ENCODE measurements at regions of chr1 and their contacts with region 1.

Region 1: DNA sequence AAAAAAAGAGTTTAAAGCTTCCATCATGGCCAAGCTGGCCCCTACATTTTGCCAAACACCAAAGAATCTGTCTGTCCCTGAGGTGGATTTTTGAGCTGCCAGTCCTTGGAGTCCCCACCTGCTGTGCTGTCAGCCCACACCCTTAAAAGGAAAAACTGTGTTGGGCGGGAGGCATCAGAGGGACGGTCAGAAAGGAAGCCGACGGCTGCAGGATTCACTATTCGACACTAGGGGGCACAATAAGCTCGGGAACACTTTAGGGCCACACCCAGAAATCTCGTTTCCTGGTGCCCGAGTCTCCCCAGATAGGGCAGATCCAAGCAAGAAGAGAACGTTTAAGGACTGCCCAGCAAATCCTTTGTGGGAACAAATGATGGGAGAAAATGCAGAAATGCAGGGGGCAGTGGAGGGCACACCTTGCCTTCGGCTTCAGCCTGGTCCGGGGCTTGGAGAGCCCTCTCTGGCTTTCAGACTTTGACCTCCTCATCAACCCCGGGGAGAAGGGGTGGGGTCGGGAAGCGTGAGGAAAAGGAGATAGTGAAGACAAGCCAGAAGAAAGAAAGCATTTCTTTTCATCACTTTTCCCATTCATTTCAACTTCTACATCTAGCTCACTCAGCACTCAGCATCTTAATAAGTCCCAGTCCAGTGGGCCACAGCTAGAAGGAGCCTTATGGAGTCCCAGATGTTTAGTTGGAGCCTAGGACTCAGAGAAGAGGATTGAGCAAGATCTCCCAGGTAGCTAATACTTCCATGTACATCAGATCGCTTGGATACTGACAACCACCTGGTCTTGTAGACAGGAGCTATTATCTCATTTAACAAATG is 5.0 kb upstream of the CTTNBP2NL start:
- DNase-seq: peak; percentile 86
- CTCF ChIP-seq: peak; percentile 87

Region 2: GRCh38 chr1:112466078-112466660 is 75.2 kb after region 1 on chr1:
- in situ Hi-C with region 1: loop called (anchors 10 kb)
- DNase-seq: peak; percentile 81
- CTCF ChIP-seq: peak; percentile 78

Region 3: GRCh38 chr1:112557385-112557784 is 166.4 kb after region 1 on chr1:
- in situ Hi-C with region 1: no loop called
- DNase-seq: no peak
- CTCF ChIP-seq: no peak

Region 4: DNA sequence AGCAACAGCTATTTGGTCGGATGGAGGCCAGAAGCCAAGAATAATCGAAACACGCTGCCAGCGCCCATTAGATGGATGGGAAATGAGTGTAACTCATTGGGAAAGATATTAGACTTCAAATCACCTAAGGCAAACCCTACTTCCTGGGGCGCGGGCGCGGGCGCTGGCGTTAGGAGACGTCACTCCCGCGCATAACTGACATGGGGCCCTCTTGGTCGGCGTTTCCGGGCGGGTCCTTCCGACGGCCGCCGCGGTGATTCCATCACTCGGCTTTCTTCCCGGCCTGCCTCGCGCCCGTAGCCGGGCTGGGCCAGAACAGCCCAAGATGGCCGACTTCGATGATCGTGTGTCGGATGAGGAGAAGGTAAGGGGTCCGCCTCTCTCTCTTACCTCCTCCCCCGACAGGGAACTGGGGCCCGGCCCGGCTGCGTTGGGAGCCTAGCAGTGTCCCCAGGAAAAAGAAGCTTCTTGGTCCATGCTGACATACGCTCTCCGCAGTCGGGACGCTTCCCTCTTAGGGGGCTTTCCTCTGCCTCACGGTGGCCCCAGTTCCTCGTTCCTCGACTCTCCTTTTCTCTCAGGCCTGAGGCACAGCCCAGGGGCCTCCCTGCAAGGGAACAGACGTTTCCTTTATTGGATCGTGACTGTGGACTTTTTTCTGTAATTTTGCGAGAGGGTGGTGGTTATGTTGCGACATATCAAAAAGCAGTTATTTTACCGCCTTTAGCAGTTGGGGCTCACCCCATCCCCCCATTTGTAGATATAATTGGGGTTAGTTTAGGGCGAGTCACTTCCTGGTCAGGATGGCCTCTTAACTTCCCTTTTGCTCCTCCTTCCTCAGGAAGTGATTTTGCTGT is 228.8 kb after region 1 on chr1 and contains the start of gene CAPZA1:
- in situ Hi-C with region 1: loop called (anchors 10 kb)
- DNase-seq: peak; percentile 86
- CTCF ChIP-seq: peak; percentile 13

Region 5: GRCh38 chr1:112694363-112694929 is 303.5 kb after region 1 on chr1:
- in situ Hi-C with region 1: no loop called
- DNase-seq: no peak
- CTCF ChIP-seq: no peak

Region 6: GRCh38 chr1:112706908-112707663 is 316.1 kb after region 1 on chr1 and contains the start of gene RHOC:
- in situ Hi-C with region 1: loop called (anchors 10 kb)
- DNase-seq: peak; percentile 94
- CTCF ChIP-seq: peak; percentile 94

Measured in GM13977 (cell line).